ENCODE measurements at regions of chr17 and their contacts with region 1.

Region 1: GRCh38 chr17:77247048-77247541 is 106.3 kb downstream of the SEC14L1 start:
- DNase-seq: peak; percentile 89
- ATAC-seq: peak; percentile 99
- H3K4me3 Mint-ChIP-seq: peak overlapping the region; percentile 55
- H3K27ac Mint-ChIP-seq: no peak overlapping the region
- H3K4me1 Mint-ChIP-seq: peaks cover 14% of the 10 kb centered on the region
- H3K27me3 Mint-ChIP-seq: peaks cover 28% of the 10 kb centered on the region
- CTCF ChIP-seq: peak; percentile 68

Region 2: DNA sequence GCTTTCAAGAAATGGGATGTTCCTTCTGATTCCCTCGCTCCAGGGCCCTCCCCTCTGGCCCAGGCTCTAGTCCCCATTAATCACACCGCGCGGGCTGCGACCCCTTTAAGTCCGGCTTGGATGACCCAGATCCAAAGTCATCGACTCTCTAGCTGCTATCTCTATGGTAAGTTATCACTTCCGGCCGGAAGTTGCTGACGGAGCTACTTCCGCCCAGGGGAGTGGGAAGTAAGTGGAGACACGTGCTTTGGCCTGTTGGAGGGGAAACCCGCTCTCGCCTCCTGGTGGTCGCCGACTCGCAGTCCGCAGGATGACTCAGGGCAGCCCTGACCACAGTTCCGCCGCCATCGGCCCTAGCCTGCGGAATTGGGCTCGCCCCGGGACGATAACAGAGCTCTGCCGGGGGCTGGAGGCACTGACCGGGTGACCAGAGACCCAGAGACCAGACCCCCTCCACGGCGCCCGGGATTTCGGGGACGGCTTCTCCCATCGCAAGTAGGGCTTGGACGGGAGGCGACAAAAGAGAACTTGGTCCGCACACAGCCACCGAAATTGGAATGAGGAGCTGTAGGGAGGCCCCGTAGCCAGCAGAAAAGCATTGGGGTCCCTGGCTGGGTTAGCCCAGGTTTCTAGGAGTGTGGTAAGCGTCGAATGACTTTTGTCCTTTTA is 158.5 kb before region 1 on chr17:
- CTCF ChIA-PET with region 1: interaction called, 12 read pairs
- POLR2A ChIA-PET with region 1: interaction called, 5 read pairs
- intact Hi-C with region 1: loop called (anchors 1 kb)
- DNase-seq: peak; percentile 84
- ATAC-seq: peak; percentile 89
- H3K4me3 Mint-ChIP-seq: peak overlapping the region; percentile 95
- H3K27ac Mint-ChIP-seq: peak overlapping the region; percentile 95
- H3K4me1 Mint-ChIP-seq: peaks cover 52% of the 10 kb centered on the region
- H3K27me3 Mint-ChIP-seq: peaks cover 3% of the 10 kb centered on the region
- CTCF ChIP-seq: no peak

Region 3: DNA sequence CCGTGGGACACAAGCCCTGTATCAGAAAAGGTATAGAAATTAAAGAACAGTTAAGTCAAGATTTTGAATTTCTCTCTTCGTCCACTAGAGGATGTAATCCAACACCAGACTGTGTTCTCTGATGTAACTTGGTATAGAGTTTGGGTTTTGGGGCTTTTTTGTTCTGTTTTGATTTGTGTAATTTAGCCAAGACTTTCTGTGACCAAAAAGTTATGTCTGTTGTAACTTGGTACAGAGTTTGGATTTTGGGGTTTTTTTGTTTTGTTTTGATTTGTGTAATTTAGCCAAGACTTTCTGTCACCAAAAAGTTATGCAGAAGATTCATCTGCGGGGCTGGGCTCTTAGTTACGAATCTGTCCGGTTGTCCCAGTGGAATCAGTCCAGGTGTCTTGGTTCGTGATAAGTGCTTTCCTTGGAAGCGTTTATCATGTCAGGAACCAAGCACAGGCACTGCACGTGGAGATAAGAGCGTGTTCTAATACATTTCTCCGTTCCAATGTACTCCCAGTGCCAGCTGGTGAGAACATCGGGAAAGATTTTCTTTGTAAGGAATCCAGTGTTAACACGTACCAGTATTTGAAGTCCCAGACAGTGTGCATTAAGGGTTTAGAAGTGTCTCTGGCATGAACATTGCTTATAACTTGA is 150.4 kb before region 1 on chr17:
- CTCF ChIA-PET with region 1: interaction called, 8 read pairs
- POLR2A ChIA-PET with region 1: no interaction called
- intact Hi-C with region 1: loop called (anchors 1 kb)
- DNase-seq: no peak
- ATAC-seq: peak; percentile 56
- H3K4me3 Mint-ChIP-seq: no peak overlapping the region
- H3K27ac Mint-ChIP-seq: peak overlapping the region; percentile 50
- H3K4me1 Mint-ChIP-seq: peaks cover 21% of the 10 kb centered on the region
- H3K27me3 Mint-ChIP-seq: no peaks in the 10 kb centered on the region
- CTCF ChIP-seq: no peak

Region 4: DNA sequence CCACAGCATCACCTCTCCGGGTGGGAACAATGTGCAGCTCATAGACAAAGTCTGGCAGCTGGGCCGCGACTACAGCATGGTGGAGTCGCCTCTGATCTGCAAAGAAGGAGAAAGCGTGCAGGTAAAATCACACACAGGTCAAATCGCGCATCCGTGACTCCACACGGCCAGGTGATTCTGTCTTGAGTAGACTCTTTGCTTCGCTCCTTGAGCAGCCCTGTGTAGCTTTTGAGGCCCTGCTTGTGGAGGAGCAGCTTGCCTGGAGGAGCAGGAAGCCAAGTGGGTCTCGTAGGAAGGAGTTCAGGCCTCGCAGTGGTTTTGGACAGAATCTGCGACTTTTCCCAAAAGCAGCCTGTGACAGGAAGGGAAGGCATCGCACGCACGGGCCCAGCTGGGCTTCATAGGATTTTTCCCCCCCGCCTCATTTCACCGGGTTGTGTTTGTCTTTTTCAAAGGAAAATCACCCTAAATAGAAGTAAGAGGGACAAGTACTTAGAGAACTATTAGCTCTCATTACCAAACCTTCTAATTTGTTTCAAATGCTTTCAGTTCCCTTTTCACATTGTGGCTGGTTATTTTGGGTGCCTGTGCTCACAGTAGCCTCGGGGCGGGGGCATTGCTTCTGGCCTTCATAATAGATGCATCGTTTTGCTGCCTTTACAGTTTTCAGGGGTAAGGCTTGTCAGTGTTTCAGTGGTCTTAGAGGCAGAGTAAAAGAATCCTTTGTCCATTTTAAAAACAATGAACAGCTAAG is 34.8 kb before region 1 on chr17:
- CTCF ChIA-PET with region 1: interaction called, 3 read pairs
- POLR2A ChIA-PET with region 1: no interaction called
- intact Hi-C with region 1: loop called (anchors 1 kb)
- DNase-seq: peak; percentile 36
- ATAC-seq: peak; percentile 93
- H3K4me3 Mint-ChIP-seq: peak overlapping the region; percentile 70
- H3K27ac Mint-ChIP-seq: peak overlapping the region; percentile 80
- H3K4me1 Mint-ChIP-seq: peaks cover 49% of the 10 kb centered on the region
- H3K27me3 Mint-ChIP-seq: no peaks in the 10 kb centered on the region
- CTCF ChIP-seq: no peak